GM23248 (cell line): ENCODE measurements at regions of chr1 and their contacts with region 1.

Region 1: GRCh38 chr1:198681831-198682759 is 43.3 kb downstream of the PTPRC start:
- DNase-seq: peak; percentile 98
- H3K4me3 ChIP-seq: peak overlapping the region; percentile 14
- H3K27ac ChIP-seq: peak overlapping the region; percentile 94
- H3K4me1 ChIP-seq: peaks cover 70% of the 10 kb centered on the region
- H3K27me3 ChIP-seq: no peaks in the 10 kb centered on the region

Region 2: GRCh38 chr1:197614916-197615692 is 1067.0 kb before region 1 on chr1:
- in situ Hi-C with region 1: loop called (anchors 25 kb)
- DNase-seq: peak; percentile 71
- H3K4me3 ChIP-seq: no peak overlapping the region
- H3K27ac ChIP-seq: no peak overlapping the region
- H3K4me1 ChIP-seq: no peaks in the 10 kb centered on the region
- H3K27me3 ChIP-seq: no peaks in the 10 kb centered on the region

Region 3: DNA sequence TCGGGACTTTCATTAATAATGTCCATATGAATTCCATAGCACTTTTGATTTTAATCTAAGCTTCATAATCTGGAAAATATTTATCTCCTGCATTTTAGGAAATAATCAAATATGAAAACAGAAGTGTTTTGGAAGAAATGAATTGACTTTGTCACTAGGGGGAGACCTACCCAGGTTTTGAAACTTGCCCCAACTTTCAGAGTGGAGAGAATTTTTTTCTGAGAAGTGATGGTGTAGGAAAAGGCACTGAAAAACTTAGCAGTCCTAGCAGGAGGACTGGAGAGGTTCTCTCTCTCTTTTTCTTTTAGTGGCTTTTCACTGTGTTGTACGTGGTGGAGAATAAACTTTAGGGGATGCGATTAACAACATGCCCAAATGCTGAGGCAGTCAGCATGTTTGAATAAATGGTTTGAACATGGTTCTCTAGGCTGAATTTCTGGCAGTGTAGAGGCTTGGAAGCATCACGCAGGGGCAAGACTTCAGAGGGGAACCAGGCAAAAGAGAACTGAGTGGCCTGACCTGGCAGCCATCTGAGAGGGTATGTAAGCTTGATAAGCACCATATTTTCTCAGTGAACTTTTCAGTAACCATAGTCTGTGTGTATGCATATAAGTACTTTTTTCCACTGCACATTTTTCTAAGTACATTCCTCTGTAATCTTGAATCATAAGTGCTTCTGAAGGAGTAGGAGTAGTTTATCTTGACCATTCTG is 593.6 kb before region 1 on chr1:
- in situ Hi-C with region 1: loop called (anchors 25 kb)
- DNase-seq: peak; percentile 74
- H3K4me3 ChIP-seq: peak overlapping the region; percentile 61
- H3K27ac ChIP-seq: peak overlapping the region; percentile 68
- H3K4me1 ChIP-seq: peaks cover 29% of the 10 kb centered on the region
- H3K27me3 ChIP-seq: no peaks in the 10 kb centered on the region

Region 4: DNA sequence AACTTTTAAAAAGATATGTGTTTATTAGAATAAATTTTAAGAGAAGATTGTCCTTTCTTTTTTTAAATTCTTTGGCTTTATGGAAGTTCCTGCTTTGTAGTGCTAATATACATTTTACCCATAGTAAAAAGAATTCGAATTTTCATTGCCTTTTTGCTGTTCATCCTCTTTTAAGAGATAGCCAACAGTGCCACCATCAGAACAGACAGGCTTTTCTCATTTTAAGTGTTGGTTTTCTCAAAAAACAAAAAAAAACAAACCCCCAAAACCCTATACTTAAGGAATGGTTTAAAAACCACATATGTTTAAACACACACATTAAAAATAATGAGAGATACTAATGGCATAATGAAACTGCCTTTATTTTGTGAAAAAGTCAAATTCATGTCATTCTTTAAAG is 406.5 kb before region 1 on chr1:
- in situ Hi-C with region 1: loop called (anchors 25 kb)
- DNase-seq: no peak
- H3K4me3 ChIP-seq: no peak overlapping the region
- H3K27ac ChIP-seq: peak overlapping the region; percentile 26
- H3K4me1 ChIP-seq: peaks cover 94% of the 10 kb centered on the region
- H3K27me3 ChIP-seq: no peaks in the 10 kb centered on the region

Region 5: GRCh38 chr1:198612471-198613260 is 69.4 kb before region 1 on chr1:
- in situ Hi-C with region 1: no loop called
- DNase-seq: no peak
- H3K4me3 ChIP-seq: no peak overlapping the region
- H3K27ac ChIP-seq: no peak overlapping the region
- H3K4me1 ChIP-seq: peaks cover 17% of the 10 kb centered on the region
- H3K27me3 ChIP-seq: no peaks in the 10 kb centered on the region